ENCODE measurements at regions of chr4 and their contacts with region 1.

Region 1: DNA sequence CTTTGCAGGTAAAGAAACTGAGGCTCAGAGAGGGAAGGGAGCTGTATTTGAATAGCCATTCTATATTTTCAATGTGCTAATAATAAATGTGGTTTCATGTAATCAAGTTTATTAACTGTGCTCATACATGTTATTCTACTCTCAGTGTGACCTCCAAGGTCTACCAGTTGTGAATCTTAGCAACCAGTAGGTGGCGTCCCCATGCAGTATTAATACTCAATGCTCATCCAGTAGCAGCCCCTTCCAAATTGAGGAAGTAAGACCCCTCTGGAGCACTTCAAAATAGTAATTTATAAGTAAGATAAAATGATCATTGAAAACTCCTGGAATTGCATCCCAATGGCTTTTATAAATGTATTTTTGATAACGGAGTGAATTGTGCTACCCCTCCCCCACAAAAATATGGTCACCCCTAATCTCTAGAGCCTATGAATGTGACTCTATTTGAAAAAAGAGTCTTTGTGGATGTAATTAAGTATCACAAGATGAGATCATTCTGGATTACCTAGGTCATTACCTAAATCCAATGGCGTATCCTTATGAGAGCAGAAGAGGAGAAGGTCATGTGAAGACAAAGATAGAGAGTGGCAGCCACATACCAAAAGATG is 20.4 kb upstream of the SEPSECS start:
- DNase-seq: no peak
- ATAC-seq: peak in 1 of 2 donors; percentile 42
- H3K4me3 ChIP-seq: no peak overlapping the region
- H3K27ac ChIP-seq: no peak overlapping the region
- H3K4me1 ChIP-seq: no peaks in the 10 kb centered on the region
- H3K27me3 ChIP-seq: no peaks in the 10 kb centered on the region

Region 2: GRCh38 chr4:25234390-25235370 is 54.1 kb after region 1 on chr4:
- intact Hi-C with region 1: loop called in 1 of 4 experiments (anchors 10 kb)
- DNase-seq: peak in 2 of 3 donors; percentile 56 to 73
- ATAC-seq: peak; percentile 75 to 77
- H3K4me3 ChIP-seq: peak overlapping the region; percentile 93
- H3K27ac ChIP-seq: peak overlapping the region; percentile 98
- H3K4me1 ChIP-seq: no peaks in the 10 kb centered on the region
- H3K27me3 ChIP-seq: no peaks in the 10 kb centered on the region

Measured in right cardiac atrium (tissue), 5 donors.